ENCODE measurements at regions of chr15 and their contacts with region 1.

Region 1: DNA sequence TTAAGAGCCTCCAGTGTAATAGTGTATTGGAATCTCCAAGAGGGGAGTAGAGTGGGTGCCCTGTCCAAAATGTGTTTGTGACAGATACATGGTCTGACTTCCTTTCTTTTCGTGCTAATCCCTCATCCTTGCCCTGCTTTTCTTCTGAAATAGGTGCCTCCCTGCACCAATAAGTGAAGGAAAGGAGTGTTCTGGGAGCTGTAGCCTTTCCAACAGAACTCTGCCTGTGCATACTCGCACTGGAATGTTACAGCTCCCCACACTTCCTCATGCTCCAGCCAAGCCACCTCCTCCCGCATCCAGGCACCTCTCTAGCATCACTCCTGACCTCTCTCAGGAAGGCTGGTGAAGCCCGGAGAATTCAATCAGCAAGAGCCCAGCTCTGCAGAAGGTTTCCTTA is 478.0 kb downstream of the GABRG3 start:
- DNase-seq: no peak
- ATAC-seq: peak in 1 of 4 donors; percentile 25
- H3K4me3 ChIP-seq: no peak overlapping the region
- H3K27ac ChIP-seq: no peak overlapping the region
- H3K4me1 ChIP-seq: no peaks in the 10 kb centered on the region
- H3K27me3 ChIP-seq: no peaks in the 10 kb centered on the region
- CTCF ChIP-seq: no peak

Region 2: GRCh38 chr15:27342991-27343390 is 106.0 kb before region 1 on chr15:
- intact Hi-C with region 1: no loop called
- DNase-seq: no peak
- ATAC-seq: no peak
- H3K4me3 ChIP-seq: no peak overlapping the region
- H3K27ac ChIP-seq: no peak overlapping the region
- H3K4me1 ChIP-seq: no peaks in the 10 kb centered on the region
- H3K27me3 ChIP-seq: no peaks in the 10 kb centered on the region
- CTCF ChIP-seq: no peak

Region 3: GRCh38 chr15:27491666-27492621 is 43.0 kb after region 1 on chr15:
- intact Hi-C with region 1: loop called in 1 of 3 experiments (anchors 10 kb)
- DNase-seq: no peak
- ATAC-seq: no peak
- H3K4me3 ChIP-seq: no peak overlapping the region
- H3K27ac ChIP-seq: no peak overlapping the region
- H3K4me1 ChIP-seq: no peaks in the 10 kb centered on the region
- H3K27me3 ChIP-seq: no peaks in the 10 kb centered on the region
- CTCF ChIP-seq: no peak

Measured in pancreas (tissue), 10 donors.